ENCODE measurements at regions of chr3 and their contacts with region 1.

Region 1: GRCh38 chr3:163011590-163011989 is 1515.0 kb downstream of the OTOL1 start:
- DNase-seq: no peak
- H3K4me3 Mint-ChIP-seq: no peak overlapping the region
- H3K27ac Mint-ChIP-seq: no peak overlapping the region
- H3K4me1 Mint-ChIP-seq: no peaks in the 10 kb centered on the region
- H3K27me3 Mint-ChIP-seq: no peaks in the 10 kb centered on the region

Region 2: DNA sequence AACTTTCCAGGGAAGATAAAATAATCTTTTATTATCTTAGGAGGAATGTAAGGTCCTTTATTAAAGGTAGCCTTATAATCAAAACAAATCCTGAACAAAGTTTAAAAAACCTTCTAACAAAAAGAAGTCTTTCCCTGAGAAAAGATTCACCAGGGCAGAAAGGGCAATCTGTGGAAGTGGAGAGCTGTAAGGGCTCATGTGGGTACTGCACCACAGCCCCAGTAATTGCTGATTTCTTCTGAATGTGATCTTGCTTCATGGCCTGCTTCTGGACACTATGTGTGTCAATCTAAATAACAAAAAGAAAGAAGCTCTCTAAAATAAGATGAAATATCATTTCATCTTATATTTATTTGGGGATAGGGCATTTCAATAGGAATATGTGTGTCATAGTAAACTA is 13.4 kb before region 1 on chr3:
- CTCF ChIA-PET with region 1: no interaction called
- intact Hi-C with region 1: loop called (anchors 1 kb)
- DNase-seq: no peak
- H3K4me3 Mint-ChIP-seq: no peak overlapping the region
- H3K27ac Mint-ChIP-seq: no peak overlapping the region
- H3K4me1 Mint-ChIP-seq: no peaks in the 10 kb centered on the region
- H3K27me3 Mint-ChIP-seq: no peaks in the 10 kb centered on the region

Region 3: GRCh38 chr3:163039636-163040035 is 28.0 kb after region 1 on chr3:
- CTCF ChIA-PET with region 1: no interaction called
- intact Hi-C with region 1: loop called (anchors 1 kb)
- DNase-seq: no peak
- H3K4me3 Mint-ChIP-seq: no peak overlapping the region
- H3K27ac Mint-ChIP-seq: no peak overlapping the region
- H3K4me1 Mint-ChIP-seq: no peaks in the 10 kb centered on the region
- H3K27me3 Mint-ChIP-seq: no peaks in the 10 kb centered on the region

Region 4: DNA sequence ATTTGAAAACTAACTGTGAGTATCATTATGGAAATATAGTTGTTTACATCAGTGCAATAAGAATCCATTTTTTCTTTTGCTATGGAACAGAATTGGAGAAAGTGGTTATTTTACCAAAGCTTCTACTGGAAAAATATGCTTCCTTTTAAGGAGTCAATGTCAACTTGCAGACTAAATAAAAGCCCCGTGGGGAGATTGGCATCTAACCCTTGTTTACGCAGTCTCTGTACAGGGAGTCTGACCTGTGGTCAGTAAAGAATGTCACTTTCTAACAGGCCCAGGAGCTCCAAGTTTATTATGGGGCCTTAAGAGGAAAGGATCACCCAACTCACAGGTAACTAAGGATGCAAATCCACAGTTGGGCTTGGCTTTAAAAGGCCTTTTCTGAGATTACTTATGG is 315.5 kb after region 1 on chr3:
- CTCF ChIA-PET with region 1: no interaction called
- intact Hi-C with region 1: no loop called
- DNase-seq: no peak
- H3K4me3 Mint-ChIP-seq: no peak overlapping the region
- H3K27ac Mint-ChIP-seq: no peak overlapping the region
- H3K4me1 Mint-ChIP-seq: no peaks in the 10 kb centered on the region
- H3K27me3 Mint-ChIP-seq: no peaks in the 10 kb centered on the region

Measured in activated naive CD4-positive, alpha-beta T cell treated with anti-CD3 and anti-CD28 coated beads for 36 hours (primary cell).